Naive thymus-derived CD4-positive, alpha-beta T cell (primary cell): ENCODE measurements at regions of chr19 and their contacts with region 1.

Region 1: GRCh38 chr19:17932485-17933338 is at the start of gene CCDC124:
- DNase-seq: peak; percentile 89 to 96 (median 94)
- ATAC-seq: peak; percentile 99
- H3K4me3 ChIP-seq: peak within 1 kb of the TSS; percentile 69
- H3K4me3 Mint-ChIP-seq: peak within 1 kb of the TSS; percentile 85 to 97 (median 93)
- H3K27ac ChIP-seq: peak within 1 kb of the TSS; percentile 86
- H3K27ac Mint-ChIP-seq: peak within 1 kb of the TSS; percentile 90 to 97 (median 95)
- H3K4me1 ChIP-seq: peaks cover 10 to 11% of the 10 kb centered on the region in 2 donors
- H3K4me1 Mint-ChIP-seq: peaks cover 6 to 24% (median 15%) of the 10 kb centered on the region in 7 donors
- H3K27me3 ChIP-seq: no peaks in the 10 kb centered on the region
- H3K27me3 Mint-ChIP-seq: peaks cover 0 to 2% (median 0%) of the 10 kb centered on the region in 5 donors
- total RNA-seq, gene CCDC124: 28.7 to 60.5 (median 32.6) TPM

Region 2: GRCh38 chr19:17703824-17704463 is 228.8 kb before region 1 on chr19:
- CTCF ChIA-PET with region 1: interaction called, 5 read pairs
- POLR2A ChIA-PET with region 1: no interaction called
- intact Hi-C with region 1: loop called (anchors 1 to 5 kb)
- DNase-seq: peak; percentile 51 to 77 (median 65)
- ATAC-seq: peak; percentile 97
- H3K4me3 ChIP-seq: no peak overlapping the region
- H3K4me3 Mint-ChIP-seq: no peak overlapping the region
- H3K27ac ChIP-seq: no peak overlapping the region
- H3K27ac Mint-ChIP-seq: peak overlapping the region in 1 of 9 donors; percentile 42
- H3K4me1 ChIP-seq: no peaks in the 10 kb centered on the region
- H3K4me1 Mint-ChIP-seq: peaks cover 0 to 5% (median 0%) of the 10 kb centered on the region in 7 donors
- H3K27me3 ChIP-seq: no peaks in the 10 kb centered on the region
- H3K27me3 Mint-ChIP-seq: peaks cover 0 to 10% (median 7%) of the 10 kb centered on the region in 5 donors

Region 3: DNA sequence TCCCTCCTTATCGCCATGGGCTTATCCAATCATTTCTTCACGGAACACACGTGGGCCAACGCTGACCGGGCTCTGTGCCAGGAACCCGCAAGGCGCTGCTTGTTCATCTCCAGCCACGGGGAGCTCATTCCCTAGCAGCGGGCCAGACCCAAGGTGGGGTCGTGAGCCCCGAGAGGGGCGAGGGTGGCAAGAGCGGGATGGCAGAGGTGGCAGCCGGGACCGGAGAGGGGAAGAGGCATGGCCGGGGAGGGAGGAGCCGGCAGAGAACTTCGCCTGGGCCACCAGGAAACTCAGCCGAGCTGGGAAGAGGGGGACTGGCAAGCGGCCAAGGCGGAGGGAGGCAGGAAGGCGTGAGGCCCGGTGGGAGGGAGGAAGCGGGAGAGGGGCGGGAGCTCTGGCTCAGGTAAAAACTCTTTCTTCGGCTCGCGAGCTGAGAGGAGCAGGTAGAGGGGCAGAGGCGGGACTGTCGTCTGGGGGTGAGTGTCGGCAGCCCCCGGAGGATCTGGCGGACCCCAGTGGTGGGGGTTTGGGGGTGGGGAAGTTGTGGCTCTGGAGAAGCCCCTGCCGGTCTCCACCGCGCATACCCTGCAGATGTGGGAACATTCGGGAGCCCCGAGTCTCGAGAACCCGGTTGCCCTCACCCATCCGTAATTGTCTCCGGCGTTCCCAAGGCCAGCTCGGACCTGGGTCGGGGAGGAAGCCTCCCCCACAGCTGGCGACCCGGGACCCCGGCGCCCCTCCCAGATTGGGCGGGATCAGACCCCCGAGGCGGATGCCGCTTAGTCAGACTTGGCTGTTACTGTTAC is 137.8 kb before region 1 on chr19 and contains the start of gene B3GNT3:
- CTCF ChIA-PET with region 1: no interaction called
- POLR2A ChIA-PET with region 1: no interaction called
- intact Hi-C with region 1: loop called in 1 of 2 experiments (anchors 10 kb)
- DNase-seq: peak in 5 of 9 donors; percentile 18 to 36 (median 25)
- ATAC-seq: peak; percentile 10
- H3K4me3 ChIP-seq: peak within 1 kb of the TSS; percentile 46
- H3K4me3 Mint-ChIP-seq: peak within 1 kb of the TSS; percentile 37 to 85 (median 68)
- H3K27ac ChIP-seq: peak within 1 kb of the TSS; percentile 51
- H3K27ac Mint-ChIP-seq: peak within 1 kb of the TSS in 8 of 9 donors; percentile 33 to 85 (median 74)
- H3K4me1 ChIP-seq: peaks cover 21 to 61% of the 10 kb centered on the region in 2 donors
- H3K4me1 Mint-ChIP-seq: peaks cover 20 to 74% (median 53%) of the 10 kb centered on the region in 7 donors
- H3K27me3 ChIP-seq: no peaks in the 10 kb centered on the region
- H3K27me3 Mint-ChIP-seq: peaks cover 0 to 22% (median 0%) of the 10 kb centered on the region in 5 donors
- total RNA-seq, gene B3GNT3: 0.53 to 0.96 TPM in 2 of 5 experiments, not detected in the others

Region 4: DNA sequence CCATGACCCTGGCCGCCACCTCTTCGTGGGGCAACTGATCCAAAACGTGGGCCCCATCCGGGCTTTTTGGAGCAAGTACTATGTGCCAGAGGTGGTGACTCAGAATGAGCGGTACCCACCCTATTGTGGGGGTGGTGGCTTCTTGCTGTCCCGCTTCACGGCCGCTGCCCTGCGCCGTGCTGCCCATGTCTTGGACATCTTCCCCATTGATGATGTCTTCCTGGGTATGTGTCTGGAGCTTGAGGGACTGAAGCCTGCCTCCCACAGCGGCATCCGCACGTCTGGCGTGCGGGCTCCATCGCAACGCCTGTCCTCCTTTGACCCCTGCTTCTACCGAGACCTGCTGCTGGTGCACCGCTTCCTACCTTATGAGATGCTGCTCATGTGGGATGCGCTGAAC is 121.0 kb before region 1 on chr19:
- CTCF ChIA-PET with region 1: no interaction called
- POLR2A ChIA-PET with region 1: no interaction called
- intact Hi-C with region 1: no loop called
- DNase-seq: no peak
- ATAC-seq: no peak
- H3K4me3 ChIP-seq: no peak overlapping the region
- H3K4me3 Mint-ChIP-seq: no peak overlapping the region
- H3K27ac ChIP-seq: no peak overlapping the region
- H3K27ac Mint-ChIP-seq: no peak overlapping the region
- H3K4me1 ChIP-seq: peaks cover 0 to 8% of the 10 kb centered on the region in 2 donors
- H3K4me1 Mint-ChIP-seq: peaks cover 0 to 21% (median 9%) of the 10 kb centered on the region in 7 donors
- H3K27me3 ChIP-seq: no peaks in the 10 kb centered on the region
- H3K27me3 Mint-ChIP-seq: peaks cover 0 to 8% (median 0%) of the 10 kb centered on the region in 5 donors

Region 5: GRCh38 chr19:17947815-17948513 is 15.3 kb after region 1 on chr19:
- CTCF ChIA-PET with region 1: interaction called, 10 read pairs
- POLR2A ChIA-PET with region 1: interaction called, 7 read pairs
- intact Hi-C with region 1: loop called (anchors 1 kb)
- DNase-seq: peak; percentile 91 to 99 (median 95)
- ATAC-seq: peak; percentile 87
- H3K4me3 ChIP-seq: peak overlapping the region; percentile 41
- H3K4me3 Mint-ChIP-seq: peak overlapping the region; percentile 68 to 88 (median 82)
- H3K27ac ChIP-seq: peak overlapping the region; percentile 99
- H3K27ac Mint-ChIP-seq: peak overlapping the region in 7 of 9 donors; percentile 48 to 96 (median 87)
- H3K4me1 ChIP-seq: peaks cover 37 to 50% of the 10 kb centered on the region in 2 donors
- H3K4me1 Mint-ChIP-seq: peaks cover 22 to 55% (median 43%) of the 10 kb centered on the region in 7 donors
- H3K27me3 ChIP-seq: peaks cover 18 to 28% of the 10 kb centered on the region in 2 donors
- H3K27me3 Mint-ChIP-seq: peaks cover 27 to 43% (median 30%) of the 10 kb centered on the region in 5 donors